CD4-positive, alpha-beta T cell (primary cell): ENCODE measurements at regions of chr12 and their contacts with region 1.

Region 1: GRCh38 chr12:120265473-120266179 is at the start of gene PXN:
- DNase-seq: peak; percentile 82 to 96 (median 91)
- ATAC-seq: peak; percentile 83
- H3K4me3 ChIP-seq: peak within 1 kb of the TSS; percentile 95
- H3K4me3 Mint-ChIP-seq: peak within 1 kb of the TSS; percentile 96
- H3K27ac ChIP-seq: peak within 1 kb of the TSS; percentile 60 to 83
- H3K27ac Mint-ChIP-seq: peak within 1 kb of the TSS; percentile 95
- H3K4me1 ChIP-seq: peaks cover 46% of the 10 kb centered on the region
- H3K4me1 Mint-ChIP-seq: peaks cover 49% of the 10 kb centered on the region
- H3K27me3 ChIP-seq: no peaks in the 10 kb centered on the region
- H3K27me3 Mint-ChIP-seq: no peaks in the 10 kb centered on the region
- CTCF ChIP-seq: peak; percentile 72
- total RNA-seq, gene PXN: 229 to 230 TPM

Region 2: GRCh38 chr12:119025786-119026185 is 1239.8 kb before region 1 on chr12:
- CTCF ChIA-PET with region 1: no interaction called
- POLR2A ChIA-PET with region 1: no interaction called
- intact Hi-C with region 1: no loop called
- DNase-seq: no peak
- ATAC-seq: no peak
- H3K4me3 ChIP-seq: no peak overlapping the region
- H3K4me3 Mint-ChIP-seq: no peak overlapping the region
- H3K27ac ChIP-seq: no peak overlapping the region
- H3K27ac Mint-ChIP-seq: no peak overlapping the region
- H3K4me1 ChIP-seq: no peaks in the 10 kb centered on the region
- H3K4me1 Mint-ChIP-seq: no peaks in the 10 kb centered on the region
- H3K27me3 ChIP-seq: no peaks in the 10 kb centered on the region
- H3K27me3 Mint-ChIP-seq: no peaks in the 10 kb centered on the region
- CTCF ChIP-seq: no peak

Region 3: GRCh38 chr12:120194534-120195395 is 70.9 kb before region 1 on chr12 and contains the start of gene GCN1:
- CTCF ChIA-PET with region 1: interaction called, 4 read pairs
- POLR2A ChIA-PET with region 1: interaction called, 80 read pairs
- intact Hi-C with region 1: no loop called
- DNase-seq: peak; percentile 75 to 92 (median 86)
- ATAC-seq: peak; percentile 88
- H3K4me3 ChIP-seq: peak within 1 kb of the TSS; percentile 64
- H3K4me3 Mint-ChIP-seq: peak within 1 kb of the TSS; percentile 95
- H3K27ac ChIP-seq: peak within 1 kb of the TSS; percentile 75 to 86
- H3K27ac Mint-ChIP-seq: peak within 1 kb of the TSS; percentile 98
- H3K4me1 ChIP-seq: peaks cover 49% of the 10 kb centered on the region
- H3K4me1 Mint-ChIP-seq: peaks cover 45% of the 10 kb centered on the region
- H3K27me3 ChIP-seq: no peaks in the 10 kb centered on the region
- H3K27me3 Mint-ChIP-seq: no peaks in the 10 kb centered on the region
- CTCF ChIP-seq: no peak
- total RNA-seq, gene GCN1: 121 to 128 TPM

Region 4: GRCh38 chr12:120228291-120229070 is 37.1 kb before region 1 on chr12:
- CTCF ChIA-PET with region 1: interaction called, 234 read pairs
- POLR2A ChIA-PET with region 1: interaction called, 192 read pairs
- intact Hi-C with region 1: loop called (anchors 1 kb)
- DNase-seq: peak; percentile 83 to 94 (median 88)
- ATAC-seq: peak; percentile 69
- H3K4me3 ChIP-seq: peak overlapping the region; percentile 28
- H3K4me3 Mint-ChIP-seq: peak overlapping the region; percentile 65
- H3K27ac ChIP-seq: peak overlapping the region in 1 of 2 donors; percentile 26
- H3K27ac Mint-ChIP-seq: peak overlapping the region; percentile 70
- H3K4me1 ChIP-seq: peaks cover 95% of the 10 kb centered on the region
- H3K4me1 Mint-ChIP-seq: peaks cover 91% of the 10 kb centered on the region
- H3K27me3 ChIP-seq: no peaks in the 10 kb centered on the region
- H3K27me3 Mint-ChIP-seq: no peaks in the 10 kb centered on the region
- CTCF ChIP-seq: peak; percentile 93

Region 5: GRCh38 chr12:120249875-120250795 is 15.5 kb before region 1 on chr12:
- CTCF ChIA-PET with region 1: interaction called, 52 read pairs
- POLR2A ChIA-PET with region 1: interaction called, 220 read pairs
- intact Hi-C with region 1: loop called (anchors 1 kb)
- DNase-seq: peak in 6 of 14 experiments; percentile 20 to 85 (median 55)
- ATAC-seq: no peak
- H3K4me3 ChIP-seq: peak overlapping the region; percentile 40
- H3K4me3 Mint-ChIP-seq: peak overlapping the region; percentile 72
- H3K27ac ChIP-seq: peak overlapping the region; percentile 35 to 59
- H3K27ac Mint-ChIP-seq: peak overlapping the region; percentile 95
- H3K4me1 ChIP-seq: peaks cover 84% of the 10 kb centered on the region
- H3K4me1 Mint-ChIP-seq: peaks cover 85% of the 10 kb centered on the region
- H3K27me3 ChIP-seq: no peaks in the 10 kb centered on the region
- H3K27me3 Mint-ChIP-seq: no peaks in the 10 kb centered on the region
- CTCF ChIP-seq: no peak

Region 6: GRCh38 chr12:120381752-120382419 is 116.3 kb after region 1 on chr12:
- CTCF ChIA-PET with region 1: no interaction called
- POLR2A ChIA-PET with region 1: no interaction called
- intact Hi-C with region 1: no loop called
- DNase-seq: no peak
- ATAC-seq: no peak
- H3K4me3 ChIP-seq: no peak overlapping the region
- H3K4me3 Mint-ChIP-seq: no peak overlapping the region
- H3K27ac ChIP-seq: no peak overlapping the region
- H3K27ac Mint-ChIP-seq: no peak overlapping the region
- H3K4me1 ChIP-seq: no peaks in the 10 kb centered on the region
- H3K4me1 Mint-ChIP-seq: no peaks in the 10 kb centered on the region
- H3K27me3 ChIP-seq: peaks cover 4 to 12% of the 10 kb centered on the region in 2 experiments
- H3K27me3 Mint-ChIP-seq: peaks cover 48% of the 10 kb centered on the region
- CTCF ChIP-seq: no peak